T-cell (primary cell): ENCODE measurements at regions of chr10 and their contacts with region 1.

Region 1: GRCh38 chr10:24920907-24921881 is 31.2 kb downstream of the PRTFDC1 start:
- DNase-seq: peak in 1 of 35 experiments; percentile 3
- ATAC-seq: peak in 2 of 4 experiments; percentile 51 to 53
- H3K4me3 ChIP-seq: no peak overlapping the region
- H3K4me3 Mint-ChIP-seq: no peak overlapping the region
- H3K27ac ChIP-seq: no peak overlapping the region
- H3K27ac Mint-ChIP-seq: peak overlapping the region; percentile 47 to 78
- H3K4me1 ChIP-seq: peaks cover 0 to 5% of the 10 kb centered on the region in 2 experiments
- H3K4me1 Mint-ChIP-seq: peaks cover 10 to 14% (median 14%) of the 10 kb centered on the region in 3 donors
- H3K27me3 ChIP-seq: no peaks in the 10 kb centered on the region
- H3K27me3 Mint-ChIP-seq: no peaks in the 10 kb centered on the region

Region 2: GRCh38 chr10:23417244-23417643 is 1504.0 kb before region 1 on chr10:
- CTCF ChIA-PET with region 1: no interaction called
- POLR2A ChIA-PET with region 1: interaction called in 1 of 2 experiments, 10 read pairs
- DNase-seq: no peak
- ATAC-seq: no peak
- H3K4me3 ChIP-seq: no peak overlapping the region
- H3K4me3 Mint-ChIP-seq: no peak overlapping the region
- H3K27ac ChIP-seq: no peak overlapping the region
- H3K27ac Mint-ChIP-seq: no peak overlapping the region
- H3K4me1 ChIP-seq: no peaks in the 10 kb centered on the region
- H3K4me1 Mint-ChIP-seq: peaks cover 0 to 4% (median 0%) of the 10 kb centered on the region in 3 donors
- H3K27me3 ChIP-seq: no peaks in the 10 kb centered on the region
- H3K27me3 Mint-ChIP-seq: peaks cover 0 to 2% of the 10 kb centered on the region in 2 donors